ENCODE measurements at regions of chrX and their contacts with region 1.

Region 1: DNA sequence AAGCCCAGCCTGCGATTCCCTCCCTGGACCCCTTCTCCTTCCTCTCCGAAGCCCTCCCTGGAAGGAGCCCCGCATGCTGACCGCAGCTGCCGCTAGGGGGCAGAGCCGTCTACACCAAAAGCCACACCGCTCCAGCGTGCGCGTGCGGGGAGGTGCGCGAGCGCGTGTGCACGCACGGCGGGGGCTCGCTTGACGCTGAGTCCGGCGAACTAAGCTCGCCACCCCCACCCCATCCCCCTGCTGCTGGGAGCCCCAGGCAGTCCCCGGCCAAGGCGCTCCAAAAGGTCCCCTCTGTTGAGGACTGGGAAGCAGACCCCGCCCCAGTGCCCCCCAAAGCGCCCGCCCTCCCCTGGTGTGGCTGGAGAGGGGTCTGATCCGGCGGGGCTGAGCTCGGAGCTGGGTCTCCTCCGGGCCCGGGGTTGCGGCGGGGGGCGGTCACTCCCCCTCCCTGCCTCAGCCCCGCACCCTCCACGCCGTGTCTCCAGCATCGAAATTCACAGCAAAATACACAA is 11.0 kb upstream of the CCNQ start:
- DNase-seq: no peak
- H3K4me3 ChIP-seq: peak overlapping the region; percentile 49 to 62 (median 52)
- H3K27ac ChIP-seq: no peak overlapping the region
- H3K4me1 ChIP-seq: peaks cover 7 to 15% (median 12%) of the 10 kb centered on the region in 4 donors
- H3K27me3 ChIP-seq: no peaks in the 10 kb centered on the region
- CTCF ChIP-seq: peak; percentile 60 to 83 (median 72)
- EP300 ChIP-seq: no peak
- POLR2A ChIP-seq: no peak

Region 2: DNA sequence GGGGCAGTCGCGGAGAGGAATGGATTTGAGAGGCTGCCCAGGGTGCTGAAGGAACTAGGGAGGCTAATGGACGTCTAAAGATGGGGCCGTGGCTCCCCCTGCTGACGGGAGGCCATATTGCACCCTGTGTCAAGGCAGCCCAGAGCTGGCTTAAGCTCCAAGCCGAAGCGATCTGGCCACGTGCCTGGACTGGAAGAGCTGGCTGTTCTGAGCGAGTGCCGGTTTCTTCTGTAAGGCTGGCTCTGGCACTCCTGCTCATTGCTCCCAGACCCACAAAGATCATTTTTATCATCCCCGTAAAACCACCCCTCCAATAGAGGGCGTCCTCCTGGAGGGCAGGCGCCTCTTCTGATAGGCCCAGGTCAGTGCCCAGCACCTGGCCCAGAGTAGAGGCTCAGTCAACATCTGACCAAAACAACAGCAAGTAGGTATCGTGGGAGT is 58.0 kb after region 1 on chrX:
- intact Hi-C with region 1: loop called (anchors 2 kb)
- DNase-seq: peak; percentile 93
- H3K4me3 ChIP-seq: peak overlapping the region in 1 of 4 donors; percentile 36
- H3K27ac ChIP-seq: peak overlapping the region; percentile 7 to 63 (median 60)
- H3K4me1 ChIP-seq: peaks cover 0 to 29% (median 5%) of the 10 kb centered on the region in 4 donors
- H3K27me3 ChIP-seq: peaks cover 0 to 5% (median 2%) of the 10 kb centered on the region in 4 donors
- CTCF ChIP-seq: peak; percentile 71 to 79 (median 75)
- EP300 ChIP-seq: no peak
- POLR2A ChIP-seq: no peak

Region 3: GRCh38 chrX:154661170-154661569 is 1051.2 kb after region 1 on chrX:
- intact Hi-C with region 1: no loop called
- DNase-seq: no peak
- H3K4me3 ChIP-seq: no peak overlapping the region
- H3K27ac ChIP-seq: no peak overlapping the region
- H3K4me1 ChIP-seq: no peaks in the 10 kb centered on the region
- H3K27me3 ChIP-seq: no peaks in the 10 kb centered on the region
- CTCF ChIP-seq: no peak
- EP300 ChIP-seq: no peak
- POLR2A ChIP-seq: no peak